Dorsolateral prefrontal cortex (tissue), 120 donors: ENCODE measurements at regions of chr16 and their contacts with region 1.

Region 1: GRCh38 chr16:71484006-71484893 is 4.9 kb downstream of the ZNF19 start:
- DNase-seq: peak; percentile 85 to 96 (median 91)
- H3K4me3 ChIP-seq: peak overlapping the region; percentile 60 to 100 (median 90)
- H3K27ac ChIP-seq: peak overlapping the region; percentile 77 to 99 (median 94)
- H3K27me3 ChIP-seq: no peaks in the 10 kb centered on the region
- CTCF ChIP-seq: peak in 33 of 56 donors; percentile 2 to 59 (median 31)

Region 2: GRCh38 chr16:71258372-71258771 is 225.9 kb before region 1 on chr16:
- intact Hi-C with region 1: no loop called
- DNase-seq: no peak
- H3K4me3 ChIP-seq: no peak overlapping the region
- H3K27ac ChIP-seq: no peak overlapping the region
- H3K27me3 ChIP-seq: no peaks in the 10 kb centered on the region
- CTCF ChIP-seq: no peak

Region 3: GRCh38 chr16:71461686-71462648 is 22.3 kb before region 1 on chr16 and contains the start of gene ZNF23:
- intact Hi-C with region 1: loop called (anchors 1 kb)
- DNase-seq: peak; percentile 81 to 96 (median 88)
- H3K4me3 ChIP-seq: peak within 1 kb of the TSS; percentile 73 to 100 (median 97)
- H3K27ac ChIP-seq: peak within 1 kb of the TSS in 58 of 59 donors; percentile 13 to 93 (median 79)
- H3K27me3 ChIP-seq: no peaks in the 10 kb centered on the region
- CTCF ChIP-seq: peak in 53 of 56 donors; percentile 11 to 68 (median 44)
- total RNA-seq, gene ZNF23: 9.3 to 23.1 (median 15.7) TPM

Region 4: DNA sequence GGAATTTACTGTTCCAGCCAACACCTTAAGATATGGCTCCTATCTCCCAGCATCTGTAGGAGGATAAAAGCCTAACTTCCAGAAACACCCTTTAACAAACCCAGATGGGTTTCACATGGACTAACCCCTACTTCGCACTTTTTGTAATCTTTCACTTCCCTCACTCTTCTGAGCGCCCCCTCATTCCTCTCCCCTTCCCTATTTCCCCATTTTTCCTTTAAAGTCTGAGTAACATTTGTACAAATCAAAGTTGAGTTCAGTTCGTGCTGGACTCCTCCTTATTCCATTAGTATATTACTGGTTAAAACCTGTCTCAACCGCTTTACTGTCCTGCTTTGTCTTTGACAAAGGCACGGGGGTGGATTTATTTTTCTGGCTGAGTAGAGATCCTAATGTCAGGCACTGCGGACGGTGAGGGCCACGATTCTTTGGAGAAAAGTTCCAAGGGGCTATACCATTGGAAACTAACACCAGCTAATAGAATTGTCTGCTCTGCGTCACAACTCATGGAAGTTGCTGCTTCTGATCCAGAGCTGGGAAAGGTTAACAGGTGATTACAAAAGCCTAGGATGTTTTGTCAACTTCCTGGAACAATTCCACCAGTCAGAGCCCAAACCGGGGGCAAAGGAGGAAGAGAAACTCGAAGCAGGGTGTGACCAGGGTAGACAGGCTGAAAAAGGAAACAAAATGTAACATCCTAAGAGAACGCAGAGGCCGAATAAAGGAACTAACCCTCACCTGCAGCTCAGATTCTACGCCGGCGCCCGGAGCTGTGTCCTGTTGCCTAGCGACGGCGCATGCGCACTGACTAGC is 80.1 kb after region 1 on chr16:
- intact Hi-C with region 1: loop called in 1 of 2 experiments (anchors 10 kb)
- DNase-seq: peak in 1 of 10 donors; percentile 89
- H3K4me3 ChIP-seq: peak overlapping the region; percentile 42 to 85 (median 72)
- H3K27ac ChIP-seq: peak overlapping the region in 53 of 59 donors; percentile 8 to 90 (median 71)
- H3K27me3 ChIP-seq: no peaks in the 10 kb centered on the region
- CTCF ChIP-seq: no peak

Region 5: DNA sequence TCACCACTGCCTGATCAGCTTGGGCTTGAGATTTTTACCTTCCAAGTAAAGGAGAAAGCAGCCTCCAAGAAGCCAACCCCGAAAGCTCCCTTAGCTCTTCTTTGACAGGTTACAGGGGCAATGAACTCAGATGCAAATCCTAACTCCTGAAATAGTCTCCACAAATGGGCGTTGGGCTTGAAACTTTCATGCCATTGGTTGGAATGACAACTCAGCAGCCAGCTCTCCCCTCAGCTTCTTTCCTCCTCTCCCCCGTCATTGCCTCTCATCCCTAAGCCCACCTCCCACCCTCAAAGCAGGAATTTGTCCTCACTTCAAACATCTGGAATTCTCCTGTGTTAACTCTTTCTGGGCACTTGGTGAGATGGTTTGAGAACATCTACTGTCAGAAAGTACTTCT is 92.7 kb after region 1 on chr16 and contains the start of gene TAT:
- intact Hi-C with region 1: no loop called
- DNase-seq: no peak
- H3K4me3 ChIP-seq: no peak within 1 kb of the TSS
- H3K27ac ChIP-seq: no peak within 1 kb of the TSS
- H3K27me3 ChIP-seq: peaks cover 0 to 9% (median 0%) of the 10 kb centered on the region in 45 donors
- CTCF ChIP-seq: no peak
- total RNA-seq, gene TAT: 0.07 to 0.49 (median 0.17) TPM in 14 of 120 experiments, not detected in the others

Region 6: DNA sequence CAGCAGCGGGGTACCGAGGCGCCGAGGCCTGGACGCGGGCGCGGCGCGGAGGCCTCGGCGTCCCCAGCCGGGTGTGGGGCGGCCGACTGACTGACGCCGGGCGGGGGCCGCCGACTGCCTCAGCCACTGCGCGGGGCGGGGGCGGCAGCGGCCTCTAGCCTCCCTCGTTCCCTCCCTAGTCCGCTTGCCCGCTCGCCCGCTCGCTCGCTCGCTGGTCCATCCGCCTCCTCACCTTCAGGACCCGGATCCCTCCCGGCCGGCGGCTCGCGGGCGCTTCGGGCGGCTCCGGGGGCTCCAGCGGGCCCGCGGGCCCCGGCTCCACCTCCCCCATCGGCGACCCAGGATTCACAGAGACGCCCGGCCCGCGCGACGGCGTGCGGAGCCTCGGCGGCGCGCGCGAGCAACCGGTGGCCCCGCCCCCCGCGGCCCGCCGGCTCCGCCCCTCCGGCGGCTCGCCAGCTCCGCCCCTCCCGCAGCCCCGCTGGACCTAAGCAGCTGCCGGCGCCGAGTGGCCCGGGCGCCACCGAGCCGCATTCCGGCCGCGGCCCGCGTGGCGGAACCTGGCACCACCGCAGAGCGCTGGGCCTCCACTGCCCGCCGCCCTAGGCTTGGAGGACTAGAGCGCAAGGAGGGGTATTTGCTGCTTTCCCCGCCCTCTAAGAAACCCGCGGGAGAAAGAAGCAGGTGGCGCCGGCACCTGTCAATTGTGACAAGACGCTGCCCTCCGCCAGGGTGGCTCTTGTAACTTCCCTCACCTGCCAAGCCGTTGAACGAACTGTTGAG is 239.5 kb after region 1 on chr16:
- intact Hi-C with region 1: loop called in 1 of 2 experiments (anchors 10 kb)
- DNase-seq: peak; percentile 56 to 86 (median 74)
- H3K4me3 ChIP-seq: peak overlapping the region; percentile 59 to 98 (median 86)
- H3K27ac ChIP-seq: peak overlapping the region in 58 of 59 donors; percentile 46 to 94 (median 88)
- H3K27me3 ChIP-seq: no peaks in the 10 kb centered on the region
- CTCF ChIP-seq: peak in 19 of 56 donors; percentile 8 to 42 (median 27)

Region 7: DNA sequence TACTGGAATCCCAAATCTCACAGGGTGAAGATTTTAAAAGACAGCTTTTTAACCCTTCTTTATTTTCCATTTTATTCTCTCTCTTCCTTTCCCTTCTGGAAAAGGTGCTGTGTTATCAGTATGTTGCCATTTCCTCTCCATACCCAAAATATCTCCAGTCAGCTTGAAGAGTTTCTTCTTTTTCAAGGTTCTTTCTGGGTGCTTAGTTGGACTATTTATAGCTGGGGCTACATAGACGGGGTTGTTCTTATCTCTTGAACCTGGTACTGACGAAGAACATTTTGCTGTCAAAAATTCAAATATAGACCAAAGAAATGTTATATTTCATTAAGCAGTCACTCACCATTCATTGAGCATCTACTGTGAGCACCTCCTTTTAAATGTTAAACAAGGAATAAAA is 459.6 kb after region 1 on chr16:
- intact Hi-C with region 1: no loop called
- DNase-seq: no peak
- H3K4me3 ChIP-seq: no peak overlapping the region
- H3K27ac ChIP-seq: no peak overlapping the region
- H3K27me3 ChIP-seq: no peaks in the 10 kb centered on the region
- CTCF ChIP-seq: no peak